ENCODE measurements at regions of chr7 and their contacts with region 1.

Region 1: DNA sequence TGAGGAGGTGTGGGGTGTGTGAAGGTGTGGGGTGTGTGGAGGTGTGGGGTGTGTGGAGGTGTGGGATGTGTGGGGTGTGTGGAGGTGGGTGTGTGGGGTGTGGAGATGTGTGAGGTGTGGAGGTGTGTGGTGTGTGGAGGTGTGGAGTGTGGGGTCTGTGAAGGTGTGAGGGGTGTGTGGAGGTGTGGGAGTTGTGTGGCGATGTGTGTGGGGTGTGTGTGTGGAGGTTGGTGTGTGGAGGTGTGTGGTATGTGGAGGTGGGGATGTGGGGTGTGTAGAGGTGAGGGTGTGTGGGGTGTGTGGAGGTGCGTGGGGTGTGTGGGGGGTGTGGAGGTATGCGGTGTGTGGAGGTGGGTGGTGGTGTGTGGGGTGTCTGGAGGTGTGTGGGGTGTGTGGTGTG is 34.8 kb downstream of the SPDYE17 start:
- DNase-seq: no peak
- ATAC-seq: peak; percentile 34 to 48
- H3K4me3 ChIP-seq: no peak overlapping the region
- H3K27ac ChIP-seq: no peak overlapping the region
- H3K4me1 ChIP-seq: no peaks in the 10 kb centered on the region
- H3K27me3 ChIP-seq: no peaks in the 10 kb centered on the region

Region 2: GRCh38 chr7:76509931-76510877 is 487.2 kb before region 1 on chr7 and contains the start of gene UPK3B:
- intact Hi-C with region 1: loop called in 1 of 4 experiments (anchors 10 kb)
- DNase-seq: peak in 1 of 3 donors; percentile 50
- ATAC-seq: peak in 1 of 2 donors; percentile 12
- H3K4me3 ChIP-seq: no peak within 1 kb of the TSS
- H3K27ac ChIP-seq: no peak within 1 kb of the TSS
- H3K4me1 ChIP-seq: no peaks in the 10 kb centered on the region
- H3K27me3 ChIP-seq: no peaks in the 10 kb centered on the region
- total RNA-seq, gene UPK3B: 0.48 to 3.5 (median 1.2) TPM

Measured in right cardiac atrium (tissue), 5 donors.